ENCODE measurements at regions of chr10 and their contacts with region 1.

Region 1: DNA sequence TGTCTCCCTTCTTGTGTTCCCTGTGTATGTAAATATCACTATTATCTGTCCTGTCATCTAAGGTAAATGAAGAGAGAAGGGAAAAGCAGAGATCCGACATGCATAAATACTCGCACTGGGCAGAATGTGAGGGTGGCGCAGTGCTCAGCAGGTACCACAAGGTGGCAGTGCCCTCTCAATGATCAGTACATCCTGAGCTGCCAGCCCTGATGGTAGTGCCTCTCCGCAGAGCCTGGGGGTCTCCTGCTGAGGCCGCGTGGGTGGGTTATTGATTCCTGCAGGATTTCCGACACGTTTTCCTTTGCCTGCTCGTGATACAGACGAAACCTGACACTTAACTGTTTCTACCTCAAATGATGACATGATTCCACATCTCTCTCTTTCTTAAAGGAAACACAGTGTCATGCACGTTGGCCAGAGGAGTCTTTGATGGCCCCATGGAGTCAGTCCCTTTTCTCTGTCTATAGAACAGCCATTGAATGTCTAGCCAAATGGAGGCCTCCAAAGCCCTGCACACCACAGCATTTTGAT is 19.8 kb downstream of the RGR start:
- DNase-seq: peak; percentile 65
- H3K4me3 Mint-ChIP-seq: no peak overlapping the region
- H3K27ac Mint-ChIP-seq: no peak overlapping the region
- H3K4me1 Mint-ChIP-seq: peaks cover 17% of the 10 kb centered on the region
- H3K27me3 Mint-ChIP-seq: peaks cover 14% of the 10 kb centered on the region
- CTCF ChIP-seq: peak; percentile 92

Region 2: DNA sequence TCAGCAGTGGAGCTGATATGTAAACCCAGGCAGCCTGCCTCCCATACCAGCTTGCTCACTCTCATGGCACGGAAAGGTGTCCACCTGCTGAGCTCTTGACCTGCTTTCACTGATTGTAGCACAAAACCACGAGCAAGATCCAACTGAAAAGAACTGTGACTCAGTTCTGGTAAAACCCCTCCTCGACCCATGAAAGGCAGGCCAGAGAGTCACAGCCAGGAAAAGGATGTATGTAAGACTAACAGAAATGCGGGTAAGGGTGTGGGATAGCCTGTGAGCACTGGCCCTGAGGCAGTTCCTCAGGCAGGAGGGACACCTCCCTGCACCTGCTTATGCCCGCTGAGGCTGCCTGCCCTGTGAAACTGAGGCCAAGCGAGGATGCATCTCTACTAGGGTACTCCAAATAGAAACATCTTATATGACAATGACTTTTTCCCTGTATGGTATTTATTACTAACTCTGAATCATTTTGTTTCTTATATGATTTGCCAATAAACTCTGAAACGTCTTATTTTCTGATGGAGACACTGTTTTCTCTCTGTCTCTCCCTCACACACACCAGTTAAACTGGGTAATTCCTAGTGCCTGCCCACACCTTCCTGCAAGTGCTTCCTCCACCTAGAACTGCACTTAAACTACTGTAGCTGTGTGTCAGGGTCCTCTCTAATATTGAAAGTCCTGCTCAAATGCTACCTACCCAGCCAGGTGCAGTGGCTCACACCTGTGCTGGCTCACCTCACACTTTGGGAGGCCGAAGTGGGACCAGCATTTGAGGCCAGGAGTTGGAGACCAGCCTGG is 198.7 kb before region 1 on chr10:
- CTCF ChIA-PET with region 1: no interaction called
- POLR2A ChIA-PET with region 1: no interaction called
- intact Hi-C with region 1: no loop called
- DNase-seq: no peak
- H3K4me3 Mint-ChIP-seq: no peak overlapping the region
- H3K27ac Mint-ChIP-seq: no peak overlapping the region
- H3K4me1 Mint-ChIP-seq: no peaks in the 10 kb centered on the region
- H3K27me3 Mint-ChIP-seq: no peaks in the 10 kb centered on the region
- CTCF ChIP-seq: no peak

Region 3: GRCh38 chr10:84243759-84244158 is 20.9 kb before region 1 on chr10:
- CTCF ChIA-PET with region 1: interaction called, 10 read pairs
- POLR2A ChIA-PET with region 1: no interaction called
- intact Hi-C with region 1: no loop called
- DNase-seq: no peak
- H3K4me3 Mint-ChIP-seq: no peak overlapping the region
- H3K27ac Mint-ChIP-seq: no peak overlapping the region
- H3K4me1 Mint-ChIP-seq: no peaks in the 10 kb centered on the region
- H3K27me3 Mint-ChIP-seq: peaks cover 17% of the 10 kb centered on the region
- CTCF ChIP-seq: no peak

Region 4: DNA sequence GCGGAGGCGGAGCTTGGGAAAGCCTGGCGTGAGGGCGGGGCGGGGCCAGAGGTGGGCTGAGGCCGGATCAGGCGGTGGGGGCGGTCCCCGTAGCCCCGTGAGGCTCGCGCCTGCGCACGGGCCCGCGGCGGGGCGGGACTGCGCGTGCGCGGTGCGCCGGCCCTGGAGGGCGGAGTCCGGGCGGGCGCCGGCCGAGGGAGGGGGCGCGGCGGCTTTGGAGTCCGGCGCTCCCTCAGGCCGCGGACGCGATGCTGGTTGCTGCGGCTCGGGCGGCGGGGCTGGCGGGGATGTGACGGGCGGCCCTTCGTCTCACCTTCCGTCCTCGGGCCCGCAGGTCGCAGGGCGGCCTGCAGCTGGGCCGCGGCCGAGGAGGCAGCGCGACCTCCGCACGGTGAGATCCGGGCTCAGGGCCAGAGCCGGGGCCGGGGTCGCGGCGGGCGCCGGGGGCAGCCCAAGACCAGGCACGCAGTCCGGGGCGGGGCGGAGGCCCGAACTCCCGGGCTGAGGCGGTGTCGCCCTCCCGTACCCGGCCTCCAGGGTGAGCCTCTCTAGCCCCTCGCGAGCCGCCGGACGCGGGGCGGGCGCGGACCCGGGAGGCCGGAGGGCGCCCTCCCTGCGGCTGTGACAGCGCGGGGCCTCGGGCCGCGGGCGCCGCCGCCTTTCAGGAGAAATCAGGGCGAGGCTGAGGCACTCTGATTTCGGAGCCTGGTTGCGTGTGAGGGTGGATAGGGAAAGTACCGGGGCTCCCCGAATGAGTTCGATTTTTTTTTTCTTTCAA is 63.9 kb after region 1 on chr10 and contains the start of gene CCSER2:
- CTCF ChIA-PET with region 1: interaction called, 5 read pairs
- POLR2A ChIA-PET with region 1: no interaction called
- intact Hi-C with region 1: loop called (anchors 5 kb)
- DNase-seq: peak; percentile 94
- H3K4me3 Mint-ChIP-seq: peak within 1 kb of the TSS; percentile 86
- H3K27ac Mint-ChIP-seq: peak within 1 kb of the TSS; percentile 93
- H3K4me1 Mint-ChIP-seq: peaks cover 21% of the 10 kb centered on the region
- H3K27me3 Mint-ChIP-seq: no peaks in the 10 kb centered on the region
- CTCF ChIP-seq: no peak
- total RNA-seq, gene CCSER2: 62.2 and 70.0 TPM in 2 replicates

Region 5: DNA sequence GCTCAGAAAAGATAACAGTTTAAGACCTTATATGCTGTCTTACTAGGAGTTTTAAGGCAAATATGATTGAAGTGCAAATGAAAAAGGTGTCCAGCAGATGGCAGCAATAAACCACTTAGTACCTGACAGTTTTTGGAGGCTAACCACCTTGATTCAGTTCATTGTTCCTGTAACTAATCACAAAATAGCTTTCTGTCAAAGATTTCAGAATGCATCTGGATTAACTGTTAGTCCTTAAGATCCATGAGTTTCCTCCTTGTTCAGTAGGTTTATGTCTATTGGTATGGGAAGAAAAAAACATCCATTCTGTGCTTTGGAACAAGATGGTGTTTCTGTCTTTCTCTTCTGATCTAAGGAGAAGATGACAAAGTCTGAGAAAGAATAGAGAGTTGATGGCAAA is 110.3 kb after region 1 on chr10:
- CTCF ChIA-PET with region 1: interaction called, 9 read pairs
- POLR2A ChIA-PET with region 1: interaction called, 3 read pairs
- intact Hi-C with region 1: loop called (anchors 1 kb)
- DNase-seq: peak; percentile 70
- H3K4me3 Mint-ChIP-seq: no peak overlapping the region
- H3K27ac Mint-ChIP-seq: no peak overlapping the region
- H3K4me1 Mint-ChIP-seq: peaks cover 5% of the 10 kb centered on the region
- H3K27me3 Mint-ChIP-seq: no peaks in the 10 kb centered on the region
- CTCF ChIP-seq: peak; percentile 68

Region 6: DNA sequence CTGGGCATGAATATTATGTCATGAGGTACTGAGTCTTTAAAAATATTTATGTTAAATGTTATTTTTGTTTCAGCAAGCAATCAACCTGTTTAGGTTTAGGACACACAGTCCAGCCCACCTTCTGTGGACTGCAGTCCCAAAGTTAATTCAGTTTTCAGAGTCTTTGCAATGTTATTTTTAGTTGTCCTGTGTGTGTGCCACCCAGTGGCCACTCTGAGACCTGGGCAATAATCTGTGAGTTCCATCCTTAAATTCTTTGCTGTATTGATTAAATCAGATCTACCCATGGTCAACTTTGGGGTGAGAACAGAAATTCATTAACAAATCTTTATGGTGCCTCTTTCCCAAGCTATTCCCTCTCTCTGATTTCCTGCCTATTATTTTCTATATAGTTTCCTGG is 478.8 kb after region 1 on chr10:
- CTCF ChIA-PET with region 1: interaction called, 3 read pairs
- POLR2A ChIA-PET with region 1: no interaction called
- intact Hi-C with region 1: loop called (anchors 10 kb)
- DNase-seq: peak; percentile 26
- H3K4me3 Mint-ChIP-seq: no peak overlapping the region
- H3K27ac Mint-ChIP-seq: no peak overlapping the region
- H3K4me1 Mint-ChIP-seq: no peaks in the 10 kb centered on the region
- H3K27me3 Mint-ChIP-seq: no peaks in the 10 kb centered on the region
- CTCF ChIP-seq: peak; percentile 28

Measured in MCF 10A (cell line).